IMR-90 (cell line): ENCODE measurements at regions of chr17 and their contacts with region 1.

Region 1: GRCh38 chr17:42928714-42929496 is 28.3 kb downstream of the G6PC1 start:
- DNase-seq: peak; percentile 85
- ATAC-seq: peak; percentile 99
- H3K4me3 ChIP-seq: no peak overlapping the region
- H3K27ac ChIP-seq: no peak overlapping the region; the same call in 1 of the 2 replicates
- H3K4me1 ChIP-seq: peaks cover 5% of the 10 kb centered on the region; the same call in 1 of the 2 replicates
- H3K27me3 ChIP-seq: peaks cover 7% of the 10 kb centered on the region
- CTCF ChIP-seq: peak; percentile 62
- POLR2A ChIP-seq: no peak
- RAD21 ChIP-seq: peak; percentile 69

Region 2: DNA sequence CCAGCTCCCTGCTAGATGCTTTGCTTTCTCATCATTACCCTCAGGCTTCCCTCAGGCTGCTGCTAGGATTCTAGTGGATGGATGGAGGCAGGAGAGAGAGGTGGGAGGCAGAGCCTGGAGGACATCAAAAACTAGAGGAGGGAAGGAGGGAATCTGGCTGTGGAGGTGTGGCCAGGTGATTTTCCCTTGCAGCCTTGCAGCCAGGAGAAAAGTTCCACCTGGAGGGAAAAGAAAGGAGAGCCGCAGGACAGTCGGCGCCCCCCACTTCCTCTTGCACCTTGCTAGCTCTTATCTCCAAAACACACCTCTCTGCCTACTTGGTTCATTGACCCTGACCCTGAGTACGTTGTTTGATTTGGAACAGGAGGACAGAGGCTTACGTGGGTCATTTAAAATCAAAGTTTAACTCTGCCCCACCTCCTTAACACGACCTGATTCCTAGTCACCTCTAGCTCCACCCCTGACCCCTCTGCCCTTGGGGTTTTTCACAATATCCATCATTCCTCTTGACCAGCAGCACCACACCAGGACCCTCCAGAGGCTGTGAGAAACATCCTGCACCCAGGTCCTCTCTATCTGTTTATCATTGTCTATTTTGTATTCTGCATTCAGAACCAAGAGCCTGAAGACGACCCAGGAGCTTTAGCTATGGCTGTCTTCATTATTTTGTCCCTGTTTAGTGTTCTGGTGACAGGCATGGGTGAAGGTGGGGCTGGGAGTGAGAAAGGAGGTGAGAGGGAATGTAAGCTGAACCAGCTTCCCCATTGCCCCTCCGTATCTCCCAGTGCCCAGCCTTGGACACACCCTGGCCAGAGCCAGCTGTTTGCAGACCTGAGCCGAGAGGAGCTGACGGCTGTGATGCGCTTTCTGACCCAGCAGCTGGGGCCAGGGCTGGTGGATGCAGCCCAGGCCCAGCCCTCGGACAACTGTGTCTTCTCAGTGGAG is 62.0 kb before region 1 on chr17:
- CTCF ChIA-PET with region 1: no interaction called
- POLR2A ChIA-PET with region 1: no interaction called
- dilution Hi-C with region 1: no loop called
- in situ Hi-C with region 1: no loop called
- intact Hi-C with region 1: loop called (anchors 1 kb)
- DNase-seq: no peak
- ATAC-seq: no peak
- H3K4me3 ChIP-seq: no peak overlapping the region
- H3K27ac ChIP-seq: no peak overlapping the region
- H3K4me1 ChIP-seq: peaks cover 3% of the 10 kb centered on the region; the same call in 1 of the 2 replicates
- H3K27me3 ChIP-seq: peaks cover 15% of the 10 kb centered on the region
- CTCF ChIP-seq: no peak
- POLR2A ChIP-seq: no peak
- RAD21 ChIP-seq: no peak

Region 3: DNA sequence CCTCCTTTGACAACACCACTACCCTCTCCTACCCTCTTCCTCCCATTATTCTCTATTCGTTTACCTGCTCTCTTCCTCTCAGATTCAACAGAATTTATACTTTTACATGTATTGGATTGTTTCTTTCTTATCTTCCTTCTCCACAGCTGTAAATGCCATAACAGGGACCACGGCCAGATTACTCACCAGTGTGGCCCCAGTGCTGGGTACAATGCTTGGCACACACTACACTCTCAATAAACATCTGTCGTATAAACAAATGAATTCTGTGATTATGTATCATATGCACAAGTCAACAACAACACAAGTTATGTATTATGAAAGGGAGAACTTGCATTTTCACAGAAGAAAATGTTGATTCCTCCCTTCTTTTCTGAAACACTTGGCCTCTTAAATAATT is 15.3 kb after region 1 on chr17:
- CTCF ChIA-PET with region 1: interaction called, 10 read pairs
- POLR2A ChIA-PET with region 1: no interaction called
- dilution Hi-C with region 1: no loop called
- in situ Hi-C with region 1: no loop called
- intact Hi-C with region 1: no loop called
- DNase-seq: peak; percentile 40
- ATAC-seq: peak; percentile 61
- H3K4me3 ChIP-seq: no peak overlapping the region
- H3K27ac ChIP-seq: no peak overlapping the region
- H3K4me1 ChIP-seq: no peaks in the 10 kb centered on the region
- H3K27me3 ChIP-seq: peaks cover 7% of the 10 kb centered on the region
- CTCF ChIP-seq: no peak
- POLR2A ChIP-seq: no peak
- RAD21 ChIP-seq: no peak